ENCODE measurements at regions of chr12 and their contacts with region 1.

Region 1: DNA sequence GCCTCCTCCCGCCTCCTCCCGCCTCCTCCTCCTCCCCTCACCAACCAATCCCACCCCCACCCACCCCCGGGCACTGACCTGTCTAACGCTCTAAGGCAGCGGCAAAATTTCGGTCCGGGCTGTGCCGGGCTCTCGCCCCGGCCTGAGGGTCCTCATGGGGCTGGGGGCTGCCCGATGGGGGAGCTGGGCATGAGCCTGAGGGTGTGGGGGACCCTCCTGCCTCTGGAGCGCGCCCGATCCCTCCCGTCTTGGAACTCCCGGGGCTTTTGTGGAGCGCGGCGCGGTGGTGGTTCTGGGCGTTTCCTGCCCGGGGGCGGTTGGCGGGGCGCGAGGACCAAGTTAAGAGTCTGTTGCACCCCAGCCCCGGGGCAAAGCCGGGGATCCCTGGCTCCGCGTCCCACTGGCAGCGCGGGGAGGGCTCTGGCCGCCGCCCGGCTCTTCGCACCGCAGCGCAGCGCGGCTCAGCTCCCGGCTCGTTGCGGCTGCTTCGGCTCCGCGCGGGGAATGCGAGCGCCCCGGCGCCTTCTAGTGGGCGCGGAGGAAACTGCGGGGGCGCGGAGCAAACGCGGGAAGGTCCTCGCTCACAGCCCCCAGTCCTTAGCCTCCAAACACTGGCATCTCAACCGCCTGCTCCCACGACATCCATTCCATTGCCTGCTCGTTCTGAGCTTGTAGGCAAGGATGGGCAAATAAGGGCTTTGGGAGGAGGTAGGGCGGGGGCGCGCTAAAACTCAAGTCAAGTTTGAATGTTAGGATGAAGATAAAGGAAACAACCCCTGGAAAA is at the start of gene B4GALNT1:
- DNase-seq: peak; percentile 47
- H3K4me3 ChIP-seq: peak within 1 kb of the TSS; percentile 61 to 69 (median 66)
- H3K27ac ChIP-seq: no peak within 1 kb of the TSS
- H3K4me1 ChIP-seq: peaks cover 20% of the 10 kb centered on the region
- H3K27me3 ChIP-seq: peaks cover 2% of the 10 kb centered on the region
- CTCF ChIP-seq: peak; percentile 66 to 83
- total RNA-seq, gene B4GALNT1: 8.0 to 13.4 TPM

Region 2: GRCh38 chr12:57693659-57694458 is 61.0 kb after region 1 on chr12 and contains the start of gene OS9:
- CTCF ChIA-PET with region 1: no interaction called
- dilution Hi-C with region 1: no loop called
- in situ Hi-C with region 1: no loop called
- intact Hi-C with region 1: loop called (anchors 5 kb)
- DNase-seq: peak; percentile 100
- H3K4me3 ChIP-seq: peak within 1 kb of the TSS; percentile 88 to 94 (median 93)
- H3K27ac ChIP-seq: peak within 1 kb of the TSS; percentile 53
- H3K4me1 ChIP-seq: peaks cover 8% of the 10 kb centered on the region
- H3K27me3 ChIP-seq: no peaks in the 10 kb centered on the region
- CTCF ChIP-seq: peak; percentile 80
- total RNA-seq, gene OS9: 111 to 145 TPM

Region 3: GRCh38 chr12:57735952-57736740 is 103.3 kb after region 1 on chr12:
- CTCF ChIA-PET with region 1: no interaction called
- dilution Hi-C with region 1: no loop called
- in situ Hi-C with region 1: no loop called
- intact Hi-C with region 1: loop called (anchors 1 kb)
- DNase-seq: peak; percentile 37
- H3K4me3 ChIP-seq: peak overlapping the region; percentile 9 to 27 (median 11)
- H3K27ac ChIP-seq: no peak overlapping the region
- H3K4me1 ChIP-seq: peaks cover 24% of the 10 kb centered on the region
- H3K27me3 ChIP-seq: peaks cover 22% of the 10 kb centered on the region
- CTCF ChIP-seq: peak; percentile 26 to 46

Measured in mammary epithelial cell (primary cell).